ENCODE measurements at regions of chr2 and their contacts with region 1.

Region 1: GRCh38 chr2:201231781-201232466 is 28.4 kb upstream of the CASP8 start:
- DNase-seq: peak; percentile 83 to 95 (median 92)
- ATAC-seq: peak; percentile 89
- H3K4me3 ChIP-seq: no peak overlapping the region
- H3K27ac ChIP-seq: peak overlapping the region; percentile 52 to 90
- H3K4me1 ChIP-seq: peaks cover 23 to 77% of the 10 kb centered on the region in 2 donors
- H3K27me3 ChIP-seq: no peaks in the 10 kb centered on the region
- CTCF ChIP-seq: peak; percentile 84 to 86

Region 2: DNA sequence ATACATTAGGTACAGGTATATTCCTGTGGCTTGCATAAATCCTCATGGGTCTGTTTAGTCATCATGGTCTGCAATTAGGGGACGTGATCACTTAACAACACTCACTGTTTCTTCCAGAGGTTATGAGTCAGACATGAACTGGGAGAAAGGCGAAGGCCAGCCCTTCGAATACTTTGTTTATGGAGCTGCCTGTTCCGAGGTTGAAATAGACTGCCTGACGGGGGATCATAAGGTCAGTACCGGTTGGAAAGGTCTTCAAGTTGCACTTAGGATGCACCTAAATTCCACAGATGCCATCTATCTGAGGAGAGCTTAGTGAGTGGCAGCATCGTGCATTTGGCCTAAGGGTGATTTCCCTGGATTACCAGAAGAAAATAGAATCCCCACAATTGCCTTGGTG is 569.2 kb before region 1 on chr2:
- intact Hi-C with region 1: no loop called
- DNase-seq: no peak
- ATAC-seq: peak; percentile 31
- H3K4me3 ChIP-seq: no peak overlapping the region
- H3K27ac ChIP-seq: no peak overlapping the region
- H3K4me1 ChIP-seq: no peaks in the 10 kb centered on the region
- H3K27me3 ChIP-seq: no peaks in the 10 kb centered on the region
- CTCF ChIP-seq: no peak

Region 3: DNA sequence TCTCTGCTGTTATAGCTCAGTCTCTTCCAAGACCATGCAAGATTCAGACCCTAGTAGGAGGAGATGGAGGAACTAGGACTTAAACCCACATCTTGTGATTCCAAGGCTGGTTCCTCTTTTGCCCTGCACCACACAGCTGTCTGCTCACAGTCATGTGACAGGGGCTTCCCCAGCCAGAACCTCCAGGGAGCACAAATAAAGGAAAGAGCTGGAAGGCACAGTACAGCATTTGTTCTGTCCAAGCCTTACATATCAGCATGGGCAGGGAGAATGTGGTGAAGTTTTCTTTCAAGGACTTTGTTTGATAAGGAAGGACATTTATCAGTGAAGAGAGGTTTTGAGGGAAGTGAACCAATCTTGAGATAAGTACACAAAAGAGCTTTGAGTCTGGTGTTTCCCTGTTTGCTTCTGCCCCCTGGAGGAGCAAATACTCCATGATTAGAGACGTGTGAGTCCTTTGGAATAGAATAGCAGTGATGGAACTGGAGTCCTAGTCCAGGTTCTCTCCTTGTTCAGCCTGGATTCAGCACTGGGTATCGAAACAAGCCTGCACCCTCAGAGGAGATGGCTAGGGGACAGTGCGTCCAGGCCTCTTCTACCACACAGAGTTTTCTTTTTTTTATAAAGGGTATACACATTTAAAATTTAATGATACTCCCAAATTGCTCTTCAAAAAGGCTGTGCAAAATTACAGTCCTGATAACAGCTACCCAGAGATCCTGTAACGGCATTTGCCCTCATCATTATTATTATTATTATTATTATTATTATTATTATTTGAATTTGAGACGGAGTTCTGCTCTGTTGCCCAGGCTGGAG is 73.6 kb before region 1 on chr2:
- intact Hi-C with region 1: no loop called
- DNase-seq: peak; percentile 34 to 89 (median 78)
- ATAC-seq: peak; percentile 90
- H3K4me3 ChIP-seq: no peak overlapping the region
- H3K27ac ChIP-seq: peak overlapping the region; percentile 78 to 91
- H3K4me1 ChIP-seq: peaks cover 11 to 71% of the 10 kb centered on the region in 2 donors
- H3K27me3 ChIP-seq: no peaks in the 10 kb centered on the region
- CTCF ChIP-seq: peak; percentile 41 to 63

Region 4: GRCh38 chr2:201182650-201183364 is 49.1 kb before region 1 on chr2 and contains the start of gene CASP10:
- intact Hi-C with region 1: loop called in 1 of 2 experiments (anchors 5 kb)
- DNase-seq: peak in 2 of 4 donors; percentile 42 to 70
- ATAC-seq: peak; percentile 95
- H3K4me3 ChIP-seq: peak within 1 kb of the TSS; percentile 47 to 64
- H3K27ac ChIP-seq: peak within 1 kb of the TSS; percentile 79 to 90
- H3K4me1 ChIP-seq: peaks cover 4 to 45% of the 10 kb centered on the region in 2 donors
- H3K27me3 ChIP-seq: no peaks in the 10 kb centered on the region
- CTCF ChIP-seq: peak; percentile 49 to 50
- polyA plus RNA-seq, gene CASP10: 14.6 to 21.2 (median 16.4) TPM

Region 5: GRCh38 chr2:201275990-201276389 is 44.1 kb after region 1 on chr2:
- intact Hi-C with region 1: no loop called
- DNase-seq: no peak
- ATAC-seq: no peak
- H3K4me3 ChIP-seq: no peak overlapping the region
- H3K27ac ChIP-seq: no peak overlapping the region
- H3K4me1 ChIP-seq: peaks cover 0 to 14% of the 10 kb centered on the region in 2 donors
- H3K27me3 ChIP-seq: no peaks in the 10 kb centered on the region
- CTCF ChIP-seq: no peak

Region 6: DNA sequence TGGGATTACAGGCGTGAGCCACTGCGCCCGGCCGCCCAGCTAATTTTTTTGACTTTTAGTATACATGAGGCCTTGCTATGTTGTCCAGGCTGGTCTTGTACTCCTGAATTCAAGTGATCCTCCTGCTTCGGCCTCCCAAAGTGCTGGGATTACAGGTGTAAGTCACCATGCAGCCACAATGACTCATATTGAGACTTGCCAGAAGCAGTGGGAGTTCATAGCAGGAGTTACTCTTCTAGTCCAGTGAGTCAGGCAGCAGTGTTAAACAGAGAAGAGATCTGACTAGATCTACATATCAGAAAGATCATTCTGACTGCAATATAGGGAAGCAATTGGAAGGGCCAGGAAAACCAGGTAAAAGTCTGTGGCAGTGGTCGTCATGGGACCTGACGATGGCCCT is 126.8 kb after region 1 on chr2:
- intact Hi-C with region 1: loop called in 1 of 2 experiments (anchors 2 kb)
- DNase-seq: no peak
- ATAC-seq: no peak
- H3K4me3 ChIP-seq: no peak overlapping the region
- H3K27ac ChIP-seq: no peak overlapping the region
- H3K4me1 ChIP-seq: no peaks in the 10 kb centered on the region
- H3K27me3 ChIP-seq: no peaks in the 10 kb centered on the region
- CTCF ChIP-seq: no peak

Measured in left lung (tissue), 14 donors.